WTC11 (cell line): ENCODE measurements at regions of chr17 and their contacts with region 1.

Region 1: GRCh38 chr17:49016788-49017463 is 19.7 kb downstream of the IGF2BP1 start:
- DNase-seq: no peak
- ATAC-seq: no peak
- H3K4me3 Mint-ChIP-seq: peak overlapping the region; percentile 3; the same call in 1 of the 2 replicates
- H3K27ac Mint-ChIP-seq: peak overlapping the region; percentile 72
- H3K4me1 Mint-ChIP-seq: peaks cover 76% of the 10 kb centered on the region
- H3K27me3 Mint-ChIP-seq: no peaks in the 10 kb centered on the region
- CTCF ChIP-seq: no peak

Region 2: GRCh38 chr17:48961516-48962233 is 55.3 kb before region 1 on chr17:
- CTCF ChIA-PET with region 1: interaction called, 16 read pairs
- POLR2A ChIA-PET with region 1: interaction called, 7 read pairs
- DNase-seq: peak; percentile 45
- ATAC-seq: peak; percentile 90
- H3K4me3 Mint-ChIP-seq: peak overlapping the region; percentile 53
- H3K27ac Mint-ChIP-seq: no peak overlapping the region
- H3K4me1 Mint-ChIP-seq: peaks cover 29% of the 10 kb centered on the region
- H3K27me3 Mint-ChIP-seq: no peaks in the 10 kb centered on the region; the same call in 1 of the 2 replicates
- CTCF ChIP-seq: no peak